ENCODE measurements at regions of chr11 and their contacts with region 1.

Region 1: DNA sequence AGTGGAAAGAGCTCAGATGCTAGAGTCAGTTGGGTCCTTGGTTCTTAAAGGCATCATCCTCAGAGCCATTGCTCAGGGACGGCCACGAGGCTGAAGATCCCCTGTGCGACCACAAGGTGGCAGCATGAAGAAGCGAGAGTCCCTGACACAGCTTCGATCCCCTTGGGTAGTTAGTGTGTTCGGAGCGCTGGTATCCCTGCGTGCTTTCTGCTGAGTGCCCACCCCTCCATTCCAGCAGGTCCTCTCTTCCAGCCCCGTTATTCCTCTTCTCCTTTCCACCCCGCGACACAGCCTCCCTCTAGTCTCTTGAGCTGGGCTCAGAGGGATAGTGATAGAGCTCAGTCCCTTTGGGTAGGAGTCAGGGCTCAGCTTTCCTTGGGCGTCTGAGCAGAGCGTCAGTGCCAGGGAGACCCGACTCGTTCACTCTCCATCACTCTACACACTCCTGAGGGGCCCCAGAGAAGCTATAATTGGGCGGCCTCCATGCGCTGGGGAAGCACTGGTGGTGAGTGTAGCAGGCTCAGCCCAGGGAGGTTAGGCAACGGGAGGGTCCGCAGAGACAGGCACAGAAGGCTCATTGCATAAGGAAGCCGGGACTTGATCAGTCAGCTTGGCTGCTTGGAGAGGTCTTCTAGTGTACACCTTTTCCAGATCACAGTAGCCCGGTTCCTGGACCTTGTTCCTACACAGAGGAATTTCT is at the start of gene OR51D1:
- DNase-seq: peak; percentile 39
- ATAC-seq: peak; percentile 84
- H3K4me3 Mint-ChIP-seq: no peak within 1 kb of the TSS
- H3K27ac Mint-ChIP-seq: no peak within 1 kb of the TSS
- H3K4me1 Mint-ChIP-seq: no peaks in the 10 kb centered on the region
- H3K27me3 Mint-ChIP-seq: peaks cover 4% of the 10 kb centered on the region
- CTCF ChIP-seq: peak; percentile 59
- total RNA-seq, gene OR51D1: not detected in 2 replicates

Region 2: GRCh38 chr11:4916581-4916980 is 279.5 kb after region 1 on chr11:
- CTCF ChIA-PET with region 1: no interaction called
- POLR2A ChIA-PET with region 1: no interaction called
- intact Hi-C with region 1: no loop called
- DNase-seq: no peak
- ATAC-seq: no peak
- H3K4me3 Mint-ChIP-seq: no peak overlapping the region
- H3K27ac Mint-ChIP-seq: no peak overlapping the region
- H3K4me1 Mint-ChIP-seq: no peaks in the 10 kb centered on the region
- H3K27me3 Mint-ChIP-seq: no peaks in the 10 kb centered on the region
- CTCF ChIP-seq: no peak

Region 3: DNA sequence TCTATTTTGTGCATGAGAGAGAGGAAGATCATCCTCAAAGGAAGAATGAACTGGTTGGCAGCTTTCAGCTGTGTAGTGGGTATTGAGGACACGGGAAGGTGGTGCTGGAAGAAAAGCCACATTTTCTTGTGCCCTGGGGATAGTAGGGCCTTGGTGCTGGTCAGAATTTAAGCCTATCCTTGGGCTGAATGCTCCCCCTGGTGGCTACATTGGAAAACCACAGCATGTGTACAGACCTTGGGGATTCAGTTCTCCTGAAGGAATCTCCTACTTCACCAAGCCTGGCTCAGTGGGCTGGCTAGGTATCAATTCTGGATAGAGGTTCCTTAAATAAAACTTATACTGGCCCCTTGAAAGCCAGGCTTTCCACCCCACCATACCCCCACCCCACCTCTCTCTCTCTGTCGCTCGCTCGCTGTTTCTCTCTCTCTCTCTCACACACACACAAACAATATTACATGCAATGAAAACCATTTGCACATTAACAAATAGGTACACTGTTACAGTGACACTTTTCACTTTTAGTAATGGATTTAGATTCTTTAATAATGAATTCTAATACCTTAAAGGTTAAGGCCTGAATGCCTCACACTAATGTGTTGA is 743.7 kb after region 1 on chr11:
- CTCF ChIA-PET with region 1: no interaction called
- POLR2A ChIA-PET with region 1: no interaction called
- intact Hi-C with region 1: loop called (anchors 5 kb)
- DNase-seq: no peak
- ATAC-seq: no peak
- H3K4me3 Mint-ChIP-seq: no peak overlapping the region
- H3K27ac Mint-ChIP-seq: no peak overlapping the region
- H3K4me1 Mint-ChIP-seq: no peaks in the 10 kb centered on the region
- H3K27me3 Mint-ChIP-seq: no peaks in the 10 kb centered on the region
- CTCF ChIP-seq: no peak